Ascending aorta (tissue), 2 donors: ENCODE measurements at regions of chr4 and their contacts with region 1.

Region 1: DNA sequence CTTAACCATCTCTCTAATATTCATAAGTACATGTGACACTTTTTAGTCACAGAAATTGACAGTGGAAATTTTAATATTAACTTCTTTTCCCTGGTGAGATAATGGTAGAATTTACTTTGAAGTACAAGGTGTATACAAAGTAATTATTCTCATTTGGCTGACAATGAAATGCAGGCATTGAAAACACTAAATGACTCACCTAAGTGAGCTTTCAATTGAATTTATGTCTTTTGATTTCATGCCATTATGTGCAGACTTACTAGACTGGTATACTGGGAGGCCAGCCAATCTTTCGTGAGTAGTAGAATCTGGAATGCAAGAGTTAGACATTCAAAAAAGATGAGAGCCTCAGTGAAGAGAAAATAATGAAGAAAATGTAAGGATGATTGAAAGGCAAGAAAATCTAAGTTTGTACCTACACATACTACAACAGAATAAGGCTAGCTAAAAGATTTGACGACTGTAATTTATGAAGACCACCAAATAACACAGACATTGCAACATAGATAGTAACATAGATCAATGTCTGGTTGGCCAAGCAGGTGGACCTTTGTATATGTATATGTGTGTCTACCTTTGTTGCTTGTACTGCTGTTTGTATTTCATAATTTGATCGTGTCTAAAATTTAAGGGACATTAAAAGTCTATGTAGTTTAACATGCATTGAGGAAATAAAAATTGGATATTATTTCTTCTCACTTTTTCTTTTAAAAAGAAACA is 459.7 kb downstream of the IL15 start:
- DNase-seq: peak in 1 of 2 donors; percentile 84
- H3K4me3 ChIP-seq: no peak overlapping the region
- H3K27ac ChIP-seq: peak overlapping the region; percentile 42 to 59
- H3K4me1 ChIP-seq: peaks cover 0 to 8% of the 10 kb centered on the region in 2 donors
- H3K27me3 ChIP-seq: no peaks in the 10 kb centered on the region
- CTCF ChIP-seq: no peak

Region 2: DNA sequence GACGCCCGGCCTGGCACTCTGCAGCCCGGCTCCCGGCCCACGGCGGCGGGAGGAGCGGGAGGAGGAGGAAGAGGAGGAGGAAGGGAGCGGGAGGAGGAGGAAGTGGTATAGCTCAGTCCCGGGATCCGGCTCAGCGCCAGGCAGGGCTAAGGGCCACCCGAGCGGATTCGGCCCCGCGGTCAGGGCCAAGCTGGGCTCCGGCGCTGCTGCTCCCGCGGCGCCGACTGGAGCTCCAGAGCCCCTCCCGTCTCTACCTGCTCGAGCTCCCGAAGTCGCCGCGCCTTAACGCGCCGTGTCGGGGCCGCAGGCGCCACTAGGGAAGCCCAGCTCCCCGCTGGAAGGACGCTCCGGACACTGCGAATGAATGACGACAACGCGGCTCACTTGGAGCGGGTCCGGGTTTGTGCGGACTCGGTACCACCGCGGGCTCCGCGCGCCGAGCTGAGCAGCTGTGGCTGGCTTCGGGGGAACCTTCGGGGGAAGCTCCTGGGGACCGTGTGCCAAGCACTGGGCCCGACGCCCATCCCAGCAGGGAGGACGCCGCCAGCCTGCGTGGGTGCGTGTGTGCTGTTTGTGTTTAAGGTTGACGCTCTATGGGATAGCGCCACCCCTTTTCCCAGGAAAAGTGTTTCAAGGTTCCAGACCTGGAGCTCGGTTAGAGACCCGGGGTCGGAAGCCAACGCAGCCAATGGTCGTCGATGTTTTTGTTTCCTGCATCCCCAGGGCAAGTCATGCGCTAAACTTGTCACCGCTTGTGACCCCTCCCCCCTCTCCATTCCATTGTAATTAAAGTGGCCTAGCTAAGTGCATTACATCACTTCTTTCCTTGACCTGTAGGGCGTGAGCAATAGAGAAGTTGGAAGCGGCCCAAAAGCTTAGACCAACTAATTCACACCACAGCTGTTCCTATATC is 1339.5 kb before region 1 on chr4 and contains the start of gene TBC1D9:
- intact Hi-C with region 1: loop called (anchors 10 kb)
- DNase-seq: peak; percentile 64 to 91
- H3K4me3 ChIP-seq: peak within 1 kb of the TSS; percentile 76 to 93
- H3K27ac ChIP-seq: peak within 1 kb of the TSS; percentile 96 to 98
- H3K4me1 ChIP-seq: peaks cover 0 to 8% of the 10 kb centered on the region in 2 donors
- H3K27me3 ChIP-seq: no peaks in the 10 kb centered on the region
- CTCF ChIP-seq: no peak
- total RNA-seq, gene TBC1D9: 25.5 TPM

Region 3: DNA sequence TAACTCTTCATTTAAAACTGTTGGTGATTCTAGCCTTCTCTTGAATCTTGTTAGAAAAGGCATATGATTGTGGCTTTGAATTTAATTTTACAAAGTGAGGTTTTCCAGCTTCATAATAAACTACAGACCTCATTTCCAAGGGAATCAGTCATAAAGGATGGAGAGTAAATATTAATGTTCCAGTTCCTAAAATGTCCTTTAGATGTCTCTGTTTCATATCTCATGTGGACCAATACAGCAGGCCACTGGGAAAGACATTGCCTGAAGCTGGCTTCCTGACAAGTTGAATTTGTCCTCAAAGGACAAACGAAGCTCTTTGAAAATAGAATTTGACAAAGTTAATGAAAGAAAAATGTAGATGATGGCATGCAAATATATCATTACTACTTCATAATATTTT is 749.9 kb before region 1 on chr4:
- intact Hi-C with region 1: loop called (anchors 5 kb)
- DNase-seq: no peak
- H3K4me3 ChIP-seq: no peak overlapping the region
- H3K27ac ChIP-seq: no peak overlapping the region
- H3K4me1 ChIP-seq: peaks cover 3 to 18% of the 10 kb centered on the region in 2 donors
- H3K27me3 ChIP-seq: no peaks in the 10 kb centered on the region
- CTCF ChIP-seq: peak; percentile 33 to 69 (median 51)

Region 4: DNA sequence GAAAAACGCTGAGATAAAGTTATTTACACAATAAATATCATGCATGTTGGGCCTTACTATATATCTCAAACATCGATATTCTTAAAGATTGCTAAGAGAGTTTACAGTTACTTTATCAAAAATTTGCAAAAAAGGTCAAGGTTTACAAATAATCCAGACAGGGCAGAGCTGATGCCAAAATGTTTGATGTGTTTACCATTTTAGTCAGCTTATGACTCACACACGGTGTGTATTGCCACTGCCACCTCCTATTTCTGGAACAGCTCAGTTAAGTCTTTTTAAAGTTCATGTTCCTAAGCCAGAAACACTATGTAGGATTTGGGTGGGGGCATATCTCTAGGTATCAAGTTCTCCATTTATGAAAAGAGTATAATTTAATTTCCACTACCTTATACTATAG is 169.5 kb after region 1 on chr4:
- intact Hi-C with region 1: loop called (anchors 5 kb)
- DNase-seq: peak in 1 of 2 donors; percentile 66
- H3K4me3 ChIP-seq: peak overlapping the region in 1 of 2 donors; percentile 8
- H3K27ac ChIP-seq: peak overlapping the region; percentile 67 to 79
- H3K4me1 ChIP-seq: peaks cover 0 to 16% of the 10 kb centered on the region in 2 donors
- H3K27me3 ChIP-seq: no peaks in the 10 kb centered on the region
- CTCF ChIP-seq: no peak

Region 5: GRCh38 chr4:142405021-142405694 is 309.1 kb after region 1 on chr4:
- intact Hi-C with region 1: loop called (anchors 10 kb)
- DNase-seq: peak in 1 of 2 donors; percentile 69
- H3K4me3 ChIP-seq: peak overlapping the region; percentile 46 to 73
- H3K27ac ChIP-seq: peak overlapping the region; percentile 73 to 76
- H3K4me1 ChIP-seq: peaks cover 3 to 15% of the 10 kb centered on the region in 2 donors
- H3K27me3 ChIP-seq: no peaks in the 10 kb centered on the region
- CTCF ChIP-seq: no peak

Region 6: GRCh38 chr4:143184217-143185116 is 1088.4 kb after region 1 on chr4 and contains the start of gene USP38:
- intact Hi-C with region 1: loop called (anchors 10 kb)
- DNase-seq: peak; percentile 66 to 95
- H3K4me3 ChIP-seq: peak within 1 kb of the TSS; percentile 77 to 80
- H3K27ac ChIP-seq: peak within 1 kb of the TSS; percentile 94 to 95
- H3K4me1 ChIP-seq: peaks cover 6 to 23% of the 10 kb centered on the region in 2 donors
- H3K27me3 ChIP-seq: no peaks in the 10 kb centered on the region
- CTCF ChIP-seq: no peak
- total RNA-seq, gene USP38: 6.7 TPM